ENCODE measurements at regions of chr1 and their contacts with region 1.

Region 1: DNA sequence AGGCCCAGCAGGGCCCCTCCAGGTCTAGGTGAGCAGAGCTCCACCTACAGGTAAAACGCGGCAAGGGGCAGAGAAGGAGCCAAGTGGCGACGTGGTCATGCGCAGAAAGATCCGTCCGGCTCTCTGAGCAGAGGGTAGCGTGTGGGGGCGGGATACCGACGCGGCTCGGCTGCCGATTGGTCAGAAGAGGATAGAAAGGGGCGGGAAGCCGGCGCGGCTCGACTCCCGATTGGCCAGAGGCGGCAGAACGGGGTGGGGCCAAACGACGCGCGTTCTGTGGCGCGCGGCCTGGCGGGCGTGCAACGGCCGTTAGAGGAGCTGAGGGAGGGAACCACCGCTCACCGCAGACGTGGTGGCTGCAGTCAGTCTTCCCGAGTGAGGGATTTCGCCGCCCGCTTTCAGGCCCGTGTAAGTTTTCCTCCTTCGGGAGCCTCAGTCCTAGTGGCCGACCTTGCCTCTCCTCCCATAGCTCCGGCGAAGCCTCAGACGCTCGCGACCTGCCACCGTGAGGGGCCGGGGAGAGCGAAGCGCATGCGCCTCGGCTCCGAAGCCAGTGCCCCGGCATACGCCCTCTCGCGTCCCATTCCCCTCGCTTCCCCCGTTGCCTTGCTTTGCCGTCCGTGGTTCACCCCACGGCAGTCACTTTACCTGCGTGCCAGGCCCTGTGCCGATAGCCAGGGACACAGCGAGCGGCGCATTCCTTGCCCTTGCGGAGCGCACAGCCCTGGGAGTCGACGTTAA is at the start of gene CEP85:
- DNase-seq: peak; percentile 99
- ATAC-seq: peak; percentile 95
- H3K4me3 Mint-ChIP-seq: peak within 1 kb of the TSS; percentile 96
- H3K27ac Mint-ChIP-seq: peak within 1 kb of the TSS; percentile 88
- H3K4me1 Mint-ChIP-seq: peaks cover 36% of the 10 kb centered on the region
- H3K27me3 Mint-ChIP-seq: no peaks in the 10 kb centered on the region
- total RNA-seq, gene CEP85: 42.0 to 56.3 TPM

Region 2: GRCh38 chr1:25819576-25820246 is 414.4 kb before region 1 on chr1 and contains the start of gene MTFR1L:
- CTCF ChIA-PET with region 1: no interaction called
- DNase-seq: peak; percentile 96
- ATAC-seq: peak; percentile 88
- H3K4me3 Mint-ChIP-seq: peak within 1 kb of the TSS; percentile 91
- H3K27ac Mint-ChIP-seq: peak within 1 kb of the TSS; percentile 92
- H3K4me1 Mint-ChIP-seq: peaks cover 23% of the 10 kb centered on the region
- H3K27me3 Mint-ChIP-seq: no peaks in the 10 kb centered on the region
- total RNA-seq, gene MTFR1L: 28.9 to 31.2 TPM

Region 3: DNA sequence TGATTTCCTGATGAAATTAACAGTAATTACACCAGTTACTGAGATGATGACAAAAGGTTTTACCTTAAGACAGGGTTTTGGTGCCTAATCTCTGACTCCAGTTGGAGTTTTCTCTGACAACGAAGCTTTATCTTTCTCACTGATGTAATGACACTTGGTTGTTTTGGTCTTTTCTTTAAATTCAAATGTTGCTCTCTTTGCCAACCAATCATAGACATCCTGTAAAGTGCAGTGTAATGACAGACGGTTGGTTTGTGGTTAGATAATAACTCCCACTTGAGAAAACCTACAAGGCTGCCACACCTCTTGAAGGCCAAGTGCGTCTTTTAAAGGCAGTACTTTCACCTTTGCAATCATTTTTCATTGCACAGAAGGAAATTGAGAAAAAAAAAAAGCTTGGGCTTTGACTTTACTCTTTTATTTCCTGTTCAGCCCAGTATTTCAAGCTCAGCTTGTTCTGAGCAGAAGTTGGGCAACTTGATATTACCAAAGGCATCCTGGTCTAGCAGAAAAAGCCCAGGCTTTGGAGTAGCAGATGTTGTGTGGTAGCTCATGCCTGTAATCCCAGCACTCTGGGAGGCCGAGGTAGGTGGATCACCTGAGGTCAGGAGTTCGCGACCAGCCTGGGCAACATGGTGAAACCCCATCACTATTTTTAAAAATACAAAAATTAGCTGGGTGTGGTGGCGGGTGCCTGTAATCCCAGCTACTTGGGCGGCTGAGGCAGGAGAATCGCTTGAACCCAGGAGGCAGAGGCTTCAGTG is 107.6 kb before region 1 on chr1:
- CTCF ChIA-PET with region 1: interaction called, 25 read pairs
- DNase-seq: peak; percentile 79
- ATAC-seq: peak; percentile 94
- H3K4me3 Mint-ChIP-seq: peak overlapping the region; percentile 74
- H3K27ac Mint-ChIP-seq: peak overlapping the region; percentile 94
- H3K4me1 Mint-ChIP-seq: peaks cover 57% of the 10 kb centered on the region
- H3K27me3 Mint-ChIP-seq: peaks cover 5% of the 10 kb centered on the region

Region 4: GRCh38 chr1:26190373-26190987 is 43.6 kb before region 1 on chr1 and contains the start of gene CATSPER4:
- CTCF ChIA-PET with region 1: interaction called, 19 read pairs
- DNase-seq: no peak
- ATAC-seq: no peak
- H3K4me3 Mint-ChIP-seq: no peak within 1 kb of the TSS
- H3K27ac Mint-ChIP-seq: no peak within 1 kb of the TSS
- H3K4me1 Mint-ChIP-seq: peaks cover 6% of the 10 kb centered on the region
- H3K27me3 Mint-ChIP-seq: peaks cover 8% of the 10 kb centered on the region
- total RNA-seq, gene CATSPER4: 0.15 TPM in 1 of 2 experiments, not detected in the other

Region 5: DNA sequence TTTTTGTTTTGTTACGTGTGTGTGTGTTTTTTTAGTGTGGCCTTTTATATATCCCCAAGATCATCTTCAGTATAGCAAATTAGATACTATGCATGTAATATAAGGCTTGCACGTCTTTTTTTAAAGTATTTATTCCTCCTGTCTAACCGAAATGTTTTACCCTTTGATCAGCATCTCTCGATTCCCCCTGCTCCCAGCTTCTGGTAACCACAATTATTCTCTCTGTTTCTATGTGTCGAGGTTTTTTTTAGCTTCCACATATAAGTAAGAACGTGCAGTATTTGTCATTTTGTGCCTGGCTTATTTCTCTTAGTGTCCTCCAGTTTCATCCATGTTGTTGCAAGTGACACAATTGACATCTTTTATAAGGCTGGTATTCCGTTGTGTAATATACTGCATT is 18.6 kb after region 1 on chr1:
- CTCF ChIA-PET with region 1: interaction called, 23 read pairs
- DNase-seq: no peak
- ATAC-seq: no peak
- H3K4me3 Mint-ChIP-seq: no peak overlapping the region
- H3K27ac Mint-ChIP-seq: no peak overlapping the region
- H3K4me1 Mint-ChIP-seq: peaks cover 10% of the 10 kb centered on the region
- H3K27me3 Mint-ChIP-seq: no peaks in the 10 kb centered on the region

Region 6: GRCh38 chr1:26363549-26364448 is 129.7 kb after region 1 on chr1:
- CTCF ChIA-PET with region 1: interaction called, 14 read pairs
- DNase-seq: peak; percentile 90
- ATAC-seq: peak; percentile 76
- H3K4me3 Mint-ChIP-seq: peak overlapping the region; percentile 7
- H3K27ac Mint-ChIP-seq: peak overlapping the region; percentile 72
- H3K4me1 Mint-ChIP-seq: peaks cover 53% of the 10 kb centered on the region
- H3K27me3 Mint-ChIP-seq: peaks cover 23% of the 10 kb centered on the region

Region 7: DNA sequence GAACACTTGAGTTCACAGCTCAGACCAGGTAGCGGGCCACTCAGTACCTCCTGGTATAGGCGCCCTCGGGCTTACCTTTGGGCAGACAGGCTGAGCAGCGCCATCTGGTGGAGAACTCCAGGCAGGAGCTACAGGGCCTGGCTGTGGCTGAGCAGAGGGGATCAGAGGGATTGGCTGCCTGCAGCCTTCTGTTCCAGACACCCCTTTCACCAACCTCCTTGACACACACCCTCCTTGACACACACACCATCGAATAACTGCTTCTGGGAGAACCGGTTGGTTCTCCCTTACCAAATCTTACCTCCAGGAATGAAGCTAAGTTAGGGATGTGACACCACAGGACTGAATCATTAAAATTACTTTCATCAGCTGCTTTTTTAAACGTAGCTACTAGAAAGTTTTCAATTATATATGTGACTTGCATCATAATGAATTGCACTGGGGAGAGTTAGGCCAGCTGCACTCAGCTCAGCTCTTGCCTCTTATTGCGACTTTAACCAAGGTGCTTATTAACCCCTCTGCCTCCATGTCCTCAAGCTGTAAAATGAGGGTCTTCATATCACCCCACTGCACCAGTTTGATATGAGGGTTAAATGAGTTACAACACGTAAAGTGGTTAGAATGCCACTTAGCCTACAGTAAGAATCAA is 183.2 kb after region 1 on chr1:
- CTCF ChIA-PET with region 1: interaction called, 33 read pairs
- DNase-seq: peak; percentile 90
- ATAC-seq: peak; percentile 99
- H3K4me3 Mint-ChIP-seq: no peak overlapping the region
- H3K27ac Mint-ChIP-seq: no peak overlapping the region
- H3K4me1 Mint-ChIP-seq: peaks cover 2% of the 10 kb centered on the region
- H3K27me3 Mint-ChIP-seq: peaks cover 57% of the 10 kb centered on the region

Measured in activated CD8-positive, alpha-beta memory T cell treated with anti-CD3 and anti-CD28 coated beads, Interleukin-2, amount 10 ng/mL, durations not matched to agents 7 days and 5 days (primary cell).